PC-3 (cell line): ENCODE measurements at regions of chr4 and their contacts with region 1.

Region 1: GRCh38 chr4:145976680-145977079 is 38.1 kb upstream of the ZNF827 start:
- DNase-seq: no peak
- ATAC-seq: no peak
- H3K4me3 ChIP-seq: no peak overlapping the region
- H3K27ac ChIP-seq: no peak overlapping the region
- H3K4me1 ChIP-seq: no peaks in the 10 kb centered on the region
- H3K27me3 ChIP-seq: peaks cover 33% of the 10 kb centered on the region
- CTCF ChIP-seq: no peak

Region 2: DNA sequence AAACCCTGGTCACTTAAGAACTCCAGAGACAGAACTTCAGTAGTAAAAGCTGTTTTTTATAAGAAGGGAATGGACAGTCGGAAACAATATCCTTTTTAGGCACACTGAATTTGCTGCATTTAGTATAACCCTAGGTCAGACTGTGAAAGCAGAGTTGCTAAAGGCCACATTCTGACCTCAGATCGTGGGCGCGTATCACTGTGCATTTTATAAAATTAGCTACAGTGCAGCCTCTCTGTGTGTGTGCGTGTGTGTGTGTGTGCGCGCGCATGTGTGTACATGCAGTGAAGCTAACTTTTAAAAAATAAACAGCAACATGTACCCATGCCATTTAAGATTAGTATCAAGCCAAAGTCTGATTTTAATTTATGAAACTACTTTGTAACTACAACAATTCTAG is 46.1 kb before region 1 on chr4:
- CTCF ChIA-PET with region 1: no interaction called
- POLR2A ChIA-PET with region 1: no interaction called
- intact Hi-C with region 1: loop called (anchors 1 kb)
- DNase-seq: no peak
- ATAC-seq: no peak
- H3K4me3 ChIP-seq: no peak overlapping the region
- H3K27ac ChIP-seq: no peak overlapping the region
- H3K4me1 ChIP-seq: peaks cover 22% of the 10 kb centered on the region
- H3K27me3 ChIP-seq: no peaks in the 10 kb centered on the region
- CTCF ChIP-seq: no peak